Heart left ventricle (tissue), 16 donors: ENCODE measurements at regions of chr1 and their contacts with region 1.

Region 1: DNA sequence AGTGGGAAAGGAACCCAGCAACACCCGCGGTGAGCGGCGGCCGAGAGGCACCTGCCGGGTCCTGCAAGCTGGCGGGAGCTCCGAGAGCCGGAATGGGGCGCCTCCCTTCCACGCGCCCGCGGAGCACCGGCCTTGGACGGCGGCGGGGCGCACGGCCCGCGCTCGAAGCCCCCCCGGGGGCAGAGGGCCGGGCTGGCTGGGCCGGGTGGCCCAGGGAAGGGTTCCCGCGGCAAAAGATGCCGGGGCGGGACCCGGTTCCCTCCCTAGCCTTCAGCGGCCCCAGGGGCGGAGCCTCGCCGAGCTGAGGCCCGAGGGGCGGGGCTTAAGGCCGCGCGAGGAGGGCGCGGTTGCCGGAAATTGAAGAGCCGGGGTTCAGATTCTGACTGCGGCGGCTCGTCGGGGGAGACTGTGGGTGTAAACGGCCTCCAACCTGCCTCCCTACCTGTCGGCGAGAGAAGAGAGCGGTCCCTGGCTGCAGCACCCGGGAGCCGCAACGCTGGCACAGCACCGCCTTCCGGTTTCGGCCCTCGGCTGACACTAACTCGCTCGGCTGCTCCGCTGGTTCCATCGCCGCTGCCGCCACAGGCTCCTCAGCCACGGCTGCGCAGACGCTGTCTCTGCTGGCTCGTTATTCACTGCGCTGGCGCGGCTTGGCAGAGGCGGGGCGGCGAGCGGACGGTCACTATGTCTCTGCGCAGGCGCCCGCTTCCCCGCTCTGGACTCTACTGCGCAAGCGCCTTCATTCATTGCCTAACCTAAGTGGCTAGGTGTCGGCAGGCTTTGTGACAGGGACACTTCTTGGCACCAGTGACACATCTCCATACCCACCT is at the start of gene RABIF:
- DNase-seq: peak; percentile 95 to 98 (median 97)
- ATAC-seq: peak; percentile 96 to 99 (median 98)
- H3K4me3 ChIP-seq: peak within 1 kb of the TSS; percentile 72 to 91 (median 80)
- H3K27ac ChIP-seq: peak within 1 kb of the TSS; percentile 75 to 98 (median 94)
- H3K4me1 ChIP-seq: peaks cover 0 to 22% (median 8%) of the 10 kb centered on the region in 12 donors
- H3K27me3 ChIP-seq: no peaks in the 10 kb centered on the region
- CTCF ChIP-seq: peak in 6 of 12 donors; percentile 9 to 53 (median 30)
- POLR2A ChIP-seq: peak in 1 of 2 donors; percentile 92
- total RNA-seq, gene RABIF: 3.6 to 9.2 (median 5.3) TPM

Region 2: GRCh38 chr1:202745323-202745888 is 143.3 kb before region 1 on chr1:
- intact Hi-C with region 1: loop called in 2 of 10 experiments (anchors 10 kb)
- DNase-seq: no peak
- ATAC-seq: no peak
- H3K4me3 ChIP-seq: no peak overlapping the region
- H3K27ac ChIP-seq: no peak overlapping the region
- H3K4me1 ChIP-seq: no peaks in the 10 kb centered on the region
- H3K27me3 ChIP-seq: no peaks in the 10 kb centered on the region
- CTCF ChIP-seq: no peak
- POLR2A ChIP-seq: no peak

Region 3: DNA sequence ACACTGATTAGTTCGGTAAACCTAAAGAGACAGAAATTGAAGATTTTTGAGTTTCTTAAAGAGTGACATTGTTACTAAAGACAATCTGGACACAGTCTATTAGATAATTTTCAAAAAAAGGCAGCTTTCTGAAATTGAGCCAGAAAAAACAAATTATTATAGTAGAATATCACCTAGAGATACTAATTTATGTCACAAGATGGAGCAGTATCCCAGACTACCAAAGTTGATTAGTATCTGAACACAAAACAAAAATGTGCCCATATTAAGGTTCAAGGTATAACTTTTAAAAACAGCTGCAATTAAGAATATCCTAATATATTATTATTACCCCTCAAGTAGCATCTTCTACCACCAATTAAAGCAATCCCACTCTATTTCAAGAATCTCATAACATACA is 138.0 kb before region 1 on chr1:
- intact Hi-C with region 1: loop called in 2 of 10 experiments (anchors 10 kb)
- DNase-seq: no peak
- ATAC-seq: no peak
- H3K4me3 ChIP-seq: no peak overlapping the region
- H3K27ac ChIP-seq: no peak overlapping the region
- H3K4me1 ChIP-seq: peaks cover 0 to 5% (median 0%) of the 10 kb centered on the region in 12 donors
- H3K27me3 ChIP-seq: no peaks in the 10 kb centered on the region
- CTCF ChIP-seq: peak in 7 of 12 donors; percentile 5 to 27 (median 20)
- POLR2A ChIP-seq: no peak

Region 4: DNA sequence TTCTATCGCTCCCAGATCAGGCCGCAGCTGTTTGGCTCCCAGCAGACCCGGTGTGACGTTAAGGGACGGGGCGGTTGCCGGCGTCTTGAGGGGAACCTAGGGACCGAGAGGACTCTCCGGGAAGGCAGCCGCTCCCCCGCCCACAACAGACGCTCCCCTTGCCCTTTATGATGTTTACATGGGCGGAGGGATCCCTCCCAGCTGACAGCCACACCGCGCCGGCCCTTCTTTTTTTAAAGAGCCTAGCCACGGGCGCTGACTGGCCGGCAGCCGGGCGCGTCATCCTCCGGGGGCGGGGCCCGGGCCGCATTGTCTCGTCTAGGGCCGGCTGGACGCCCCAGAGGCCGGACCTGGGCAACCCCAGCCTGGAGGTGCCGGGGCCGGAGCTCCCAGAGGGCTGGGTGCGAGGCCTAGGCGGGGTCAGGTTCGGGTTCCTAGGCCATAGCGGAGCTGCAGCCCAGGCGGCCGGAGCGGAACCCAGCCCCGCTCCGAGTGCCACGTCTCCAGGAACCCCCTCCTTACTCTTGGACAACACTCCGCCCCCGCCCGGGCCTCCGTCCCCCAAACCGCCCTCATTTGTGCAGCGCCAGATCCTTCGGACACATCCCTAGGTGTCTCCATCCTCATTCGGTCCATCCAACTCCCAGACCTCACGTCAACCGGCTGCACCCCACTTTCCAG is 78.0 kb before region 1 on chr1 and contains the start of gene PCAT6:
- intact Hi-C with region 1: loop called in 6 of 10 experiments (anchors 2 to 5 kb)
- DNase-seq: peak; percentile 95 to 97 (median 96)
- ATAC-seq: peak; percentile 91 to 96 (median 94)
- H3K4me3 ChIP-seq: peak within 1 kb of the TSS; percentile 51 to 89 (median 75)
- H3K27ac ChIP-seq: peak within 1 kb of the TSS; percentile 43 to 91 (median 82)
- H3K4me1 ChIP-seq: peaks cover 0 to 39% (median 18%) of the 10 kb centered on the region in 12 donors
- H3K27me3 ChIP-seq: no peaks in the 10 kb centered on the region
- CTCF ChIP-seq: no peak
- POLR2A ChIP-seq: peak in 1 of 2 donors; percentile 88
- total RNA-seq, gene PCAT6: 0.39 to 2.5 (median 1.0) TPM in 8 of 9 donors, not detected in the other

Region 5: GRCh38 chr1:203006948-203007871 is 118.5 kb after region 1 on chr1 and contains the start of gene TMEM183A:
- intact Hi-C with region 1: no loop called
- DNase-seq: peak; percentile 97 to 98 (median 97)
- ATAC-seq: peak; percentile 98 to 99 (median 98)
- H3K4me3 ChIP-seq: peak within 1 kb of the TSS; percentile 63 to 97 (median 84)
- H3K27ac ChIP-seq: peak within 1 kb of the TSS; percentile 52 to 94 (median 91)
- H3K4me1 ChIP-seq: peaks cover 0 to 32% (median 15%) of the 10 kb centered on the region in 12 donors
- H3K27me3 ChIP-seq: no peaks in the 10 kb centered on the region
- CTCF ChIP-seq: no peak
- POLR2A ChIP-seq: peak; percentile 80 to 96
- total RNA-seq, gene TMEM183A: 20.0 to 34.8 (median 29.9) TPM